Activated B cell treated with CpG ODN at 0.5 μM for 24 hours (primary cell): ENCODE measurements at regions of chr14 and their contacts with region 1.

Region 1: GRCh38 chr14:50773632-50774541 is 57.1 kb downstream of the NIN start:
- DNase-seq: no peak
- ATAC-seq: peak; percentile 67
- H3K4me3 Mint-ChIP-seq: no peak overlapping the region
- H3K27ac Mint-ChIP-seq: no peak overlapping the region
- H3K4me1 Mint-ChIP-seq: peaks cover 17% of the 10 kb centered on the region
- H3K27me3 Mint-ChIP-seq: no peaks in the 10 kb centered on the region
- CTCF ChIP-seq: no peak

Region 2: DNA sequence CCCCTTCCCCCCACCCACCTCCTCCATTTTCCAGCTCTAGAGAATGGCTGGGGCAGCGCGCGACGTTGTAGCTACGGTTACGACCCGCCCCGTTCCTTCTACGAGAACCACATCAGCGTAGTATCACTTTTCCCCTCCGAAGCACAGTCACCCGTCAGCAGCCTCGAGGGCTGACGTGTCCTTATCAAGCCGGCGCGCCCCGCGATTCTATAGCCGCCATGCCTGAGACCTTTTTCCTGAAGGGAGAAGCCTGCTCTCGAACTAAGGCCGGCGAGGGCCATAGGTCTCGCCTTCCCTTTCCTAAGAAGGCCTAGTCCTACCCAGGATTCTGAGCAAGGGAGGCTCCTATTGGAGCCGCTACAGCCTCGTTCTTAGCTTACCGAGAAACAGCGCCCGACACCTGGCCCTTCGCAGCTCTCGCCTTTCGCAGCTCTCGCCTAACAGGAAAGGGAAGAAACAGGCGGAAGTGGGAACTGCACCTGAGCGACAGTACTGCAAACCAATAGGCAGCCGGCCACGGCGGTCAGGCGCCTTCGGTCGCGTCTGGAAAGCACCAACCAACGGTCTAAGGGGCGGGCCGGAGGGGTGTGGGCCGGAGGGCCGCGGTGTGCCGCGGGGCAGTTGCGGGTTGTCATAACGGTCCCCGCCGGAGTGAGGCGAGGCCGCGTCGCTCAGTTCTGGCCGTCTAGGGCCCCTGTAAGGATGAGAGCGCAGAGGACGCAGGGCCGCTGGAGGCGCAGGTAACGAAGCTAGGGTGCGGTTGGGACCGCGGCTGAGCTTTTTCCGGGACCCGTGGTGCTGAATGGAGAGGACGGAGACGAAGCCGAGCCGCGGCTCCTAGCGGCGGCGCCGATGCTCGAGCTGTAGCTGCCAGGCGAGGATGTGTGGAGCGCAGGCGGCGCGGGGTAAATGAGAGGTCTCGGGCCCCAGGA is 1153.4 kb before region 1 on chr14 and contains the starts of genes MGAT2 and RPL36AL:
- CTCF ChIA-PET with region 1: no interaction called
- POLR2A ChIA-PET with region 1: no interaction called
- intact Hi-C with region 1: no loop called
- DNase-seq: peak; percentile 90
- ATAC-seq: peak; percentile 90
- H3K4me3 Mint-ChIP-seq: peak within 1 kb of the TSS; percentile 97
- H3K27ac Mint-ChIP-seq: peak within 1 kb of the TSS; percentile 97
- H3K4me1 Mint-ChIP-seq: peaks cover 61% of the 10 kb centered on the region
- H3K27me3 Mint-ChIP-seq: no peaks in the 10 kb centered on the region
- CTCF ChIP-seq: no peak
- total RNA-seq, gene MGAT2: 39.7 and 40.5 TPM in 2 replicates
- total RNA-seq, gene RPL36AL: 150 and 166 TPM in 2 replicates

Region 3: DNA sequence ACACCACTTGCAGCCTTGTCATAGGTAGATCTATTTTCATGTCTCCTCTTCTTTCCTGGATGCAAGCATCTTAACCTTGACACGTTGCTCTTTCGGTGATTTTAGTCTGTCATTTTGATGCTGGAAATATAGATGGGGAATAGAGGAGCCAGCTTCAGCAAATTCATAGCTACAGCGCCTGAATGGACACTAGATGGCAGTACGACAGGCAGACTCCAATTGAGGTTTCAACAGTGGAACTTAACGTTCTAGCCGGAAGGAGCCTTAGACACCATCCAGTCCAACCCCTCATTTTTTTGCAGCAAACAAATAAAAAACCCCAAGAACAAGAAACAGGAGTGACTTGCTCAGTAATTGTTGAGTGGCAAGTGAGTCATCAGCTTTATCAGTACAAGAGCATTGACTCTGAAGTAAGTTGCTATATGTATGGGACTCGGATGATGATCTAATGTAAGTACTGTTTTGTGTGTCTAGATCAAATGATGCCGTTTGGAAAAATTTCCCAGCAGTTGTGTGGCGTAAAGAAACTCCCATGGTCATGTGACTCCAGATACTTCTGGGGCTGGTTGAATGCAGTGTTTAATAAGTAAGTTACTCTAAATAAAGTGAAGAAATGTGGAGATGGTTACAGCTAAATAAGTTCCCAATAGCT is 452.8 kb before region 1 on chr14:
- CTCF ChIA-PET with region 1: interaction called, 4 read pairs
- POLR2A ChIA-PET with region 1: no interaction called
- intact Hi-C with region 1: loop called (anchors 5 kb)
- DNase-seq: no peak
- ATAC-seq: peak; percentile 94
- H3K4me3 Mint-ChIP-seq: no peak overlapping the region
- H3K27ac Mint-ChIP-seq: no peak overlapping the region
- H3K4me1 Mint-ChIP-seq: peaks cover 21% of the 10 kb centered on the region
- H3K27me3 Mint-ChIP-seq: no peaks in the 10 kb centered on the region
- CTCF ChIP-seq: peak; percentile 43

Region 4: GRCh38 chr14:50619556-50620141 is 154.2 kb before region 1 on chr14:
- CTCF ChIA-PET with region 1: interaction called, 24 read pairs
- POLR2A ChIA-PET with region 1: no interaction called
- intact Hi-C with region 1: no loop called
- DNase-seq: no peak
- ATAC-seq: peak; percentile 68
- H3K4me3 Mint-ChIP-seq: no peak overlapping the region
- H3K27ac Mint-ChIP-seq: no peak overlapping the region
- H3K4me1 Mint-ChIP-seq: peaks cover 5% of the 10 kb centered on the region
- H3K27me3 Mint-ChIP-seq: no peaks in the 10 kb centered on the region
- CTCF ChIP-seq: peak; percentile 30

Region 5: DNA sequence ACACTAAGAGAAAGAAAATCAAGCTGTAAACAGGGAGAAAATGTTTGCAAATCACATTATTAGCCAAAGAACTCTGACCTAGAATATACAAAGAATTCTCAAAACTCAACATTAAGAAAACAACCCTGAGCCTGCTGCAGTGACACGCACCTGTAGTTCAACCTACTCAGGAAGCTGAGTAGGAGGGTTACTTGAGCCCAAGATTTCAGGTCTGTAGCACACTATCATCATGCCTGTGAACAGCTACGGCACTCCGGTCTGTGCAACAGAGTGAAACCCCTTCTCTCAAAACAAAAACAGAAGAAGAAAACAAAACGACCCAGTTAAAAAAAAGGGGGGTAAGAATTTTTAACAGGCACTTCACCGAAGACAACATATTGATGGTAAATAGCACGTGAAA is 126.6 kb before region 1 on chr14:
- CTCF ChIA-PET with region 1: no interaction called
- POLR2A ChIA-PET with region 1: no interaction called
- intact Hi-C with region 1: no loop called
- DNase-seq: no peak
- ATAC-seq: peak; percentile 96
- H3K4me3 Mint-ChIP-seq: peak overlapping the region; percentile 70
- H3K27ac Mint-ChIP-seq: peak overlapping the region; percentile 75
- H3K4me1 Mint-ChIP-seq: peaks cover 60% of the 10 kb centered on the region
- H3K27me3 Mint-ChIP-seq: no peaks in the 10 kb centered on the region
- CTCF ChIP-seq: no peak

Region 6: DNA sequence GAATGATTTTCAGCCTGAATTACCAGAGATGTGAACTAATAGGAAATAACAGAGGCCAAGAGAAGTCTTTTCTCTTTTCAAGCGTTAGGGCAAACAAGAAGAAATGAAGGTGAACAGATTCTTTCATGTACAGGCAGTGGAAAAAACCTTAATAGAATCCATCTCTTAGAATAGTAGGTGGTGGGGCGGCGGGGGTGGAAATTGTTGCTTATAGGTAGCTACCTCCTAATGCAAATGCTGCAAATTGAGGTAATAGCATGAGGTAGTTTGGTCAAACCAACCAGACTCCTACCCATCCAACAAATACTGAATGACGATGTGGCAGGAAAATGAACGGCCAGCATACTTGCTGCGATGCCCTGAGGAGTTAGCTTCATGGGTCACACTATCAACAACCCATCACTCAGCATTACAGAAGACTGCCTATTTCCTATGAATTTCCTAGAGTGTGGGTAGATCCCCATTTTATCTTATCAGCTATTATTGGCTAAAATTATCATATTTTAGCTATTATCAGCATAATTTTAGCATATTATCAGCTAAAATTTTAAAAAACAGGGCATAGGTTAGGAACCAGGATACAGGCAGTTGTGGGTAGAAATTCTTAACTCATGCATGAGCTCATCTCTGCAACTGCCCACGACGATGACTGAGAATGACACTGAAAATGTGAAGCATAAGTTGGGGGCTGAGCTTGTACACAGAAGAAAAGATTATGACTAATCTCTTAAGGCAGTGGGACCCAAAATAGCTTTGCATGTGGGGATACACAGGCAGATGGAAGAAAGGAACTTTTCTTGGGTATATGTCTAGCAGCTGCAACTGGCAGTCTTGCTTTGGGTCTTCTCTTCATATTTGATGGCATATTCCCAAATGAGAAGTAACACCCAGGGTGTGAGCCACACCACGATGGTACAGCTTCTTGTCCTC is 11.6 kb before region 1 on chr14:
- CTCF ChIA-PET with region 1: interaction called, 28 read pairs
- POLR2A ChIA-PET with region 1: no interaction called
- intact Hi-C with region 1: loop called (anchors 2 kb)
- DNase-seq: no peak
- ATAC-seq: no peak
- H3K4me3 Mint-ChIP-seq: no peak overlapping the region
- H3K27ac Mint-ChIP-seq: no peak overlapping the region
- H3K4me1 Mint-ChIP-seq: no peaks in the 10 kb centered on the region
- H3K27me3 Mint-ChIP-seq: no peaks in the 10 kb centered on the region
- CTCF ChIP-seq: no peak

Region 7: DNA sequence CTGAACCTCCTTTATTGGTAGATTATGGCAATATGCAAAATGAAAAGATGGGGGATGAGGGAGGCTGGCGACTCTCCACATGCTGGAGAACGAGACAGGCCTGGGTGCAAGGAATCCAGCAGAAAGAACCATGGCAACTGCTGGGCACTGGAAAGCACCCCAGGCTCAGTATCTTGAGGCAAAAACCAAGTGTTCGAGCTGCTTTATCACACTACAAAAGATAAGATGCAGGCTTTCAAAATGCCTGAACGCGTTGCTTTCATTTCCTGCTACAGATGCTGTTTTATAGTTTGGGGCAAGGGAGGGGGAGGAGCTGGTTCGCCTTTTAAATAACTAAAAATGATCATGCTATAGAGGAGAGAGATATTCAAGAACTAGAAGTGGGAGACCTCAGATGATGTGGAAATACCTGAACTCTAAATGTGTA is 18.2 kb after region 1 on chr14:
- CTCF ChIA-PET with region 1: interaction called, 60 read pairs
- POLR2A ChIA-PET with region 1: interaction called, 5 read pairs
- intact Hi-C with region 1: no loop called
- DNase-seq: no peak
- ATAC-seq: peak; percentile 43
- H3K4me3 Mint-ChIP-seq: peak overlapping the region; percentile 66
- H3K27ac Mint-ChIP-seq: peak overlapping the region; percentile 92
- H3K4me1 Mint-ChIP-seq: peaks cover 98% of the 10 kb centered on the region
- H3K27me3 Mint-ChIP-seq: no peaks in the 10 kb centered on the region
- CTCF ChIP-seq: no peak